ENCODE measurements at regions of chr20 and their contacts with region 1.

Region 1: DNA sequence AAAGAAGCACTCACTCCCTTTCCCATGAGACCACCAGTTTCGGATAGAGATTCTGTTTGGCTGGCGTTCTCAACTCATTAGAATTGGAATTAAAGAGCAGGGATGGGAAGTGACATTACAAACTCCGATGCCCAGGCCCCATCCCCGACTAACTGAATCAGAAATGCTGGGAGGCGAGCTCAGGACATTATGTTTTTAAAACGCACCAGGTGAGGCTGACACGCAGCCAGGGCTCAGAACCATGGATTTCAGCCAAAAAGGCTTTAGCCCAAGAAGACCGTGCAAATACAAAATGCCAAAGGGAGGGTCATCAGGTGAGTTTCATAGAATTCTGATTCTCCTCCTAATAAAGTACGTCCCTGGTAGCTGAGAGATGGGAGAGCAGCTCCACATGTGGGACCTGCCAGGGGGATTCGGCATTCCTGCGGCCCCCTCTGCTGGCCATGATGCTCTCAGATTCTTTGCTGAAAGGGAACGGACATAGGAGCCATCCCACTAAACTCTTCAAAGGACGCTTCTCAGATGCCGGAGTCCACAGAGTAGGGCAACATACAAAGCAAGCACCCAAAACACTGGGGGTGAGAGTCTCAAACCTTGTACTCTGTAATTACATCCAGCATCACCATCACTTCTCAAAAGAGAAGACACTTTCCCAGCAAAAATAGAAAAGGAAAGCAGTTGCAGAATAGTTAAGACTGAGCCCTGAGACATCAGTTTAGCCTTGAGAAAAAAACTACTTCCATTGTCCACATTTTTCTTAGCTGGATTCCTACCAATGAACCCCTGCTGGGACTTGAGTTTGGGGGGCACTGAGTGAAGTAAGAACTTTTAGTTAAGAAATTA is 205.2 kb downstream of the BMP7 start:
- ATAC-seq: peak; percentile 63 to 97 (median 78)
- H3K4me3 ChIP-seq: no peak overlapping the region
- H3K27ac ChIP-seq: no peak overlapping the region
- H3K4me1 ChIP-seq: peaks cover 0 to 5% of the 10 kb centered on the region in 2 donors

Region 2: GRCh38 chr20:56540420-56540819 is 520.9 kb before region 1 on chr20:
- in situ Hi-C with region 1: loop called in 1 of 9 experiments (anchors 25 kb)
- ATAC-seq: peak in 6 of 8 experiments; percentile 60 to 100 (median 79)
- H3K4me3 ChIP-seq: no peak overlapping the region
- H3K27ac ChIP-seq: no peak overlapping the region
- H3K4me1 ChIP-seq: no peaks in the 10 kb centered on the region

Measured in motor neuron (in vitro differentiated cells).